ENCODE measurements at regions of chr4 and their contacts with region 1.

Region 1: GRCh38 chr4:82739316-82740179 is 59.0 kb downstream of the SCD5 start:
- DNase-seq: peak; percentile 40 to 53 (median 42)
- H3K4me3 ChIP-seq: no peak overlapping the region
- H3K4me3 Mint-ChIP-seq: no peak overlapping the region
- H3K27ac ChIP-seq: no peak overlapping the region
- H3K27ac Mint-ChIP-seq: peak overlapping the region in 1 of 7 donors; percentile 30
- H3K4me1 ChIP-seq: no peaks in the 10 kb centered on the region
- H3K4me1 Mint-ChIP-seq: no peaks in the 10 kb centered on the region
- H3K27me3 ChIP-seq: no peaks in the 10 kb centered on the region
- H3K27me3 Mint-ChIP-seq: peaks cover 0 to 7% (median 2%) of the 10 kb centered on the region in 3 donors
- CTCF ChIP-seq: peak; percentile 96

Region 2: DNA sequence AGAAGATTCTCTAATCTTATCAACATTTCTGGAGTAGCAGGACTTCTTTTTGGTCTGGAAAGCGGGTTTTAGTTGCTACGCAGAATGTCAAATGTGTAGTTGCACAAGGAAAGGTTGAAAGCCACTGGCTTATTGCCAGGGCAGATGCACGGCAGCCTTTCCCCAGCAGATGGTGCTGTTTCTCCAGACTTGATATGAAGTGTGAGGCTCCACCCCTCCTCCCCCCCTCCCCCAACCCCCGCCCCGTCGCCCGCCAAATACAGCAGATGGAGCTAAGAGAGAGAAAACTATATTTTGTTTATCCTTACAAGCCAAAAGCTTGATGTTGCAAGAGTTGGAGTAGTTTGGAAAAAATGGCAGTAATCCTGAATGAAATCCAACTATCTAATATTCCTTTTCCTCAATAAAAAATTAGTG is 277.1 kb before region 1 on chr4:
- intact Hi-C with region 1: loop called (anchors 2 to 5 kb)
- DNase-seq: peak; percentile 71 to 84 (median 73)
- H3K4me3 ChIP-seq: no peak overlapping the region
- H3K4me3 Mint-ChIP-seq: no peak overlapping the region
- H3K27ac ChIP-seq: no peak overlapping the region
- H3K27ac Mint-ChIP-seq: no peak overlapping the region
- H3K4me1 ChIP-seq: no peaks in the 10 kb centered on the region
- H3K4me1 Mint-ChIP-seq: peaks cover 8% of the 10 kb centered on the region
- H3K27me3 ChIP-seq: no peaks in the 10 kb centered on the region
- H3K27me3 Mint-ChIP-seq: no peaks in the 10 kb centered on the region
- CTCF ChIP-seq: peak; percentile 79

Measured in CD14-positive monocyte (primary cell).